Activated CD8-positive, alpha-beta T cell treated with anti-CD3 and anti-CD28 coated beads, Interleukin-2, amount 10 ng/mL, durations not matched to agents 7 days and 5 days (primary cell): ENCODE measurements at regions of chr11 and their contacts with region 1.

Region 1: GRCh38 chr11:73184953-73185671 is 33.0 kb upstream of the P2RY2 start:
- DNase-seq: peak; percentile 68
- ATAC-seq: peak; percentile 86
- H3K4me3 Mint-ChIP-seq: no peak overlapping the region
- H3K27ac Mint-ChIP-seq: no peak overlapping the region
- H3K4me1 Mint-ChIP-seq: peaks cover 11% of the 10 kb centered on the region
- H3K27me3 Mint-ChIP-seq: peaks cover 24% of the 10 kb centered on the region

Region 2: DNA sequence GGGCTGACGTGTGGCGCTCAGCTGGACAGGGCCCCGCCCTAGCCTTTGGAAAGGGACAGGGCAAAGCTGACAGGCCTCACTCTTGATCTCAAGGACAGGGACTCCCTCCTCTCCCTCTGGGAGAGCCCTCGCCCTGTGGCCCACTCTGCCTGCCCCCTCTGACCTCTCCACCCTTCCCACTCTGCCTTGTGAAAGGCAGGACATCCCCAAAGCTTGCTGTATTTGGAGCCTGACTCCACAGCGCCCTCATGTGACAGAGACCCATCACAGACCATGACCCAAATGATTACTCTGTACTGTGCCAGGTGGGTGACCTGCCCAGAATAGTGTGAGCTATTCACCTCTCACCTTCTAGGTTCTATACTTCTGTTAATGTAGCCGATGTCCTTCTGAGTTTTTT is 51.7 kb after region 1 on chr11:
- CTCF ChIA-PET with region 1: interaction called, 20 read pairs
- POLR2A ChIA-PET with region 1: no interaction called
- DNase-seq: peak; percentile 52
- ATAC-seq: peak; percentile 71
- H3K4me3 Mint-ChIP-seq: no peak overlapping the region
- H3K27ac Mint-ChIP-seq: no peak overlapping the region
- H3K4me1 Mint-ChIP-seq: no peaks in the 10 kb centered on the region
- H3K27me3 Mint-ChIP-seq: no peaks in the 10 kb centered on the region

Region 3: DNA sequence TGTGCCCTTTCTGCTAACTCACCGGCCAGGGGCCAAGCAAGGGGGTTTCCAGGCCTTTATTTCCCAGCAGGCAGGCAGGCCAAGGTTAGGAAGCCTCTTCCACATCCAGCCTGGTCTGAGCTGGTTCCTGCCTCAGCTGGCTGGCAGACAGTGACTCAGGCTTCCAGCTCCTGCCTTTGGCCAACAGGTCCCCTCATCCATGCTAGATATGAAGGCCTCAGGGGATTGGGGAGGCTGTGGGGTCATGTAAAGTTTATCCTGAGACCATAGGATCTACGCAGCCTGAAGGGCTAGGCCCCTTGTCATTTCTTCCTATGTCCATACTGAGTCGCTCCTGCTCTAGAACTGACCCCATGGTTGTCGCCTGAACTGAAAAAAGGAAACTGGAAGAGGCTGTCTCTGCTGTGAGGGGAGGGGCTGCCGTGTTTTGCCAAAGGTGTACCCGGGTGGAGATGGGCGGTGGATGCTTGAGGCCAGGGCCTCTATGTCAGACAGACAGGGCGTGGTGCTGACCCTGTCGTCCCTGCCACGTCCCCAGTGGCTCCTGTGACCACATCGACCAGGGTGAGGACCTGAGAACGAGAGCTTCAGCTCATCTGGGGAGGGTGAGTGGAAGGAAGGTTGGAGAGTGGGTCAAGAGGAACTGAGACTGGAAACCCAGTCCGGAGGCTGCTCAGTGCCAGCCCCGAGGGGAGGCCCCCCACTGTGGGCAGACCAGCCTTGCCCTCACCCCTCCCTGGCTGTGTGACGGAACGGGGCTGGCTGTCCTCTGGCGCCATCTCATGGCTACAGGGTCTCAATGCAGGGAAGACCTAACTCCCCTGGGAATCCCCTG is 104.0 kb after region 1 on chr11:
- CTCF ChIA-PET with region 1: interaction called, 39 read pairs
- POLR2A ChIA-PET with region 1: no interaction called
- DNase-seq: peak; percentile 59
- ATAC-seq: peak; percentile 66
- H3K4me3 Mint-ChIP-seq: no peak overlapping the region
- H3K27ac Mint-ChIP-seq: no peak overlapping the region
- H3K4me1 Mint-ChIP-seq: peaks cover 23% of the 10 kb centered on the region
- H3K27me3 Mint-ChIP-seq: peaks cover 10% of the 10 kb centered on the region